Body of pancreas (tissue), 4 donors: ENCODE measurements at regions of chr3 and their contacts with region 1.

Region 1: DNA sequence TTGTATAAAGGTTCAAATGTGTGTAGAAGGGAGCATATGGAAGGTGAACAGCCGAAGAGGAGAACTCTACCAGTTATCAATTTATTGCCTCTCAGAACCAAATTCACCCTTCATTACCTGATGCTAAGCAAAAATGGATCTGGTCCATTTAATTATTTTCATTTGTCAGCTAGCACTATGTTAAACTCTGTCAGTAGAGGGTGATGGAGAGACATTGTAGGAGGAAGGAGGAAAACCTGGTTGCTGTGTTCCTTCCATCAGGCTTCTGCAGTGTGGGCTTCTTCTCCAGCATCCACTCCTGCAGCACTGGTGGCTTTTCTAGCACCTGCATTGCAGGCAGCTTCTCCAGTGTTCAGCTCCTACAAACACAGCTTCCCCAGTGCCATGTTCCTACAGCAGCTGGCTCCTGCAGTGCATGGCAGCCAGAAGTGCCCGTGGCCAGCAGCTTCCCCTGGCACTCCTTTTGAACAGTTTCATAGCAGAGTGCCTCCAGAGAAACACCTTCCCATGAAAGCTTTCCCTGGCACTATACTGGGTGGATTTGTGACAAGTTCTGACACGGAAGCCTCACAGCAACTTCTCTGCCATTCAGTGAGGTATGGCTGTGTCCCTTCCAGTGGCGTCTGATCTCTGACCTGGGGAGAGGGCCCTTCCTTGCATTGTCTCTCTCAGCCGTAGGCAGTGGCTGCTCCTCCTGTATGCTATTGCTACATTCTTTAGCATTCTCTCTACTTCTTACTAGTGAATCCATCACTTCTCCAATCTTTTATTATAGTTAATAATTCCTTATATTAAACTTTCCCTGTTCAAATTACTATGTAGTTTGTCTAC is 14.6 kb upstream of the IL17RD start:
- DNase-seq: no peak
- ATAC-seq: peak; percentile 35
- H3K4me3 ChIP-seq: no peak overlapping the region
- H3K27ac ChIP-seq: peak overlapping the region in 2 of 4 donors; percentile 14 to 29
- H3K4me1 ChIP-seq: no peaks in the 10 kb centered on the region
- H3K27me3 ChIP-seq: no peaks in the 10 kb centered on the region
- CTCF ChIP-seq: peak in 5 of 7 experiments; percentile 12 to 37 (median 32)
- POLR2A ChIP-seq: no peak

Region 2: DNA sequence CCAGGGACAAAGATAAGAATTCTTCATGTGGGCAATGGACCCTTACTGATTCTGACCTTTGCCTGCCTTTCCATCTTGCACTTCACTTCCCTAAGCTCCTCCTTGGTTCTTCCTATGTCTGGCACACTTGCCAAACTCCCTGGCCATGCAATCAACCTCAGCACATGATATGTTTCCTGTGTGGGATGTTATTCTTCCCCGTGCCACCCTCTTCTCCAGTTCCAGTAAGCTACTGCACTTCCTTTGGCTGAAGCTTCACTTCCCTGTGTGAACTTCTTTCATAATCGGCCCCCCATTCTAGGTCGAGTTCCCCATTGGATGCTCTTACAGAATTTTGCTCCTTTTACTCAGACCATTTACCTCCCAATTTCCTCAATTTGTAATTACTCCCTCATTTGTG is 486.0 kb before region 1 on chr3:
- intact Hi-C with region 1: no loop called
- DNase-seq: peak in 1 of 4 donors; percentile 66
- ATAC-seq: no peak
- H3K4me3 ChIP-seq: no peak overlapping the region
- H3K27ac ChIP-seq: peak overlapping the region in 1 of 4 donors; percentile 32
- H3K4me1 ChIP-seq: no peaks in the 10 kb centered on the region
- H3K27me3 ChIP-seq: no peaks in the 10 kb centered on the region
- CTCF ChIP-seq: no peak
- POLR2A ChIP-seq: no peak

Region 3: DNA sequence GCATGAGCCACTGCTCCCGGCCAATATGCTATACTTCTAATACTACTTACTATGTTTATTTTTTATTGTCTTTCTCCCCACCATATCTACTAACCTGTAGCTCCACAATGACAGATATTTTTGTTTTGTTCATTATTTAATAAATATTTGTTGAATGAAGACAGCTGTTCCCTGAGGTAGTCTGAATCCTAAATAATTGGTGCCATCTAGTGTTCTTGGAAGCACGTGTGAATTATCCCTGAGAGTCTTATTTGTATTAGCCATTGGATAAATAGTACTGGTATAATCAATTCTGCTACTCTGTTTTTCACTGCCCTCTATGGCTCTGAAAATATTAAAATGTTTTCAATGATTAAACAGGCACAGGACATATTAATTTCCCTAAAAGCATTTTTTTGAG is 42.1 kb after region 1 on chr3:
- intact Hi-C with region 1: loop called (anchors 5 kb)
- DNase-seq: no peak
- ATAC-seq: peak; percentile 56
- H3K4me3 ChIP-seq: no peak overlapping the region
- H3K27ac ChIP-seq: no peak overlapping the region
- H3K4me1 ChIP-seq: peaks cover 21% of the 10 kb centered on the region
- H3K27me3 ChIP-seq: no peaks in the 10 kb centered on the region
- CTCF ChIP-seq: peak in 5 of 7 experiments; percentile 32 to 61 (median 48)
- POLR2A ChIP-seq: no peak